ENCODE measurements at regions of chr5 and their contacts with region 1.

Region 1: DNA sequence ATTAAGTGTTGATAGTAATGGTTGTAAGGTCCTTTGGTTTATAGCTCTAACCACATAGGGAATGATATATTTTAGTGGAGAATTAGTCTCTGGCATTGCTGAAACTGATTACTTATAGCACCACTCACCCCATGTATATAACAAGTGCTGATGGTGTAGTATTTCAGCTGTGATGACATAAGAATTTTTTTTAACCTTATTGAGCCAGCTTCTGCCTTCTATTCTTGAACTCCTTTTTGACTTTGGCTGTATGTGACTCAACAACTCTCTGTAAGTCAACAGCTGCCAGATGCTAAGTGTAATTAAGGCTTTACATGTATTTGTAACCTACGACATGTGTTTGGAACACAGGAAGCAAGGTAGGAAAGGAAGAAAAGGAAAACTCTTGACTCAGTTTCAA is 929.6 kb upstream of the WWC1 start:
- DNase-seq: no peak
- H3K4me3 ChIP-seq: no peak overlapping the region
- H3K27ac ChIP-seq: no peak overlapping the region
- H3K4me1 ChIP-seq: no peaks in the 10 kb centered on the region
- H3K27me3 ChIP-seq: no peaks in the 10 kb centered on the region
- CTCF ChIP-seq: no peak
- POLR2A ChIP-seq: no peak

Region 2: GRCh38 chr5:166926138-166926537 is 435.7 kb before region 1 on chr5:
- intact Hi-C with region 1: loop called (anchors 10 kb)
- DNase-seq: no peak
- H3K4me3 ChIP-seq: no peak overlapping the region
- H3K27ac ChIP-seq: no peak overlapping the region
- H3K4me1 ChIP-seq: no peaks in the 10 kb centered on the region
- H3K27me3 ChIP-seq: no peaks in the 10 kb centered on the region
- CTCF ChIP-seq: no peak
- POLR2A ChIP-seq: no peak

Region 3: GRCh38 chr5:167012123-167013034 is 349.4 kb before region 1 on chr5:
- intact Hi-C with region 1: loop called (anchors 5 kb)
- DNase-seq: no peak
- H3K4me3 ChIP-seq: no peak overlapping the region
- H3K27ac ChIP-seq: no peak overlapping the region
- H3K4me1 ChIP-seq: no peaks in the 10 kb centered on the region
- H3K27me3 ChIP-seq: no peaks in the 10 kb centered on the region
- CTCF ChIP-seq: no peak
- POLR2A ChIP-seq: no peak

Measured in breast epithelium (tissue), 4 donors.